Activated CD4-positive, alpha-beta T cell treated with anti-CD3 and anti-CD28 coated beads for 36 hours (primary cell): ENCODE measurements at regions of chrX and their contacts with region 1.

Region 1: GRCh38 chrX:100829730-100830129 is 9.5 kb downstream of the CSTF2 start:
- DNase-seq: peak; percentile 35
- ATAC-seq: peak; percentile 92
- H3K4me3 Mint-ChIP-seq: peak overlapping the region; percentile 59
- H3K27ac Mint-ChIP-seq: peak overlapping the region; percentile 96
- H3K4me1 Mint-ChIP-seq: peaks cover 28% of the 10 kb centered on the region
- H3K27me3 Mint-ChIP-seq: no peaks in the 10 kb centered on the region

Region 2: GRCh38 chrX:100994352-100995281 is 164.9 kb after region 1 on chrX:
- CTCF ChIA-PET with region 1: no interaction called
- POLR2A ChIA-PET with region 1: no interaction called
- intact Hi-C with region 1: loop called in 1 of 2 experiments (anchors 5 kb)
- DNase-seq: peak; percentile 38
- ATAC-seq: peak; percentile 88
- H3K4me3 Mint-ChIP-seq: no peak overlapping the region
- H3K27ac Mint-ChIP-seq: peak overlapping the region; percentile 65
- H3K4me1 Mint-ChIP-seq: peaks cover 22% of the 10 kb centered on the region
- H3K27me3 Mint-ChIP-seq: no peaks in the 10 kb centered on the region

Region 3: GRCh38 chrX:101136235-101136634 is 306.5 kb after region 1 on chrX:
- CTCF ChIA-PET with region 1: no interaction called
- POLR2A ChIA-PET with region 1: interaction called, 12 read pairs
- intact Hi-C with region 1: no loop called
- DNase-seq: no peak
- ATAC-seq: no peak
- H3K4me3 Mint-ChIP-seq: no peak overlapping the region
- H3K27ac Mint-ChIP-seq: no peak overlapping the region
- H3K4me1 Mint-ChIP-seq: no peaks in the 10 kb centered on the region
- H3K27me3 Mint-ChIP-seq: no peaks in the 10 kb centered on the region

Region 4: GRCh38 chrX:101206471-101206870 is 376.7 kb after region 1 on chrX:
- CTCF ChIA-PET with region 1: no interaction called
- POLR2A ChIA-PET with region 1: no interaction called
- intact Hi-C with region 1: loop called in 1 of 2 experiments (anchors 5 kb)
- DNase-seq: peak; percentile 12
- ATAC-seq: peak; percentile 83
- H3K4me3 Mint-ChIP-seq: no peak overlapping the region
- H3K27ac Mint-ChIP-seq: no peak overlapping the region
- H3K4me1 Mint-ChIP-seq: peaks cover 16% of the 10 kb centered on the region
- H3K27me3 Mint-ChIP-seq: no peaks in the 10 kb centered on the region

Region 5: GRCh38 chrX:101348452-101349192 is 518.9 kb after region 1 on chrX and contains the start of gene TIMM8A:
- CTCF ChIA-PET with region 1: no interaction called
- POLR2A ChIA-PET with region 1: no interaction called
- intact Hi-C with region 1: loop called in 1 of 2 experiments (anchors 5 kb)
- DNase-seq: peak; percentile 88
- ATAC-seq: peak; percentile 98
- H3K4me3 Mint-ChIP-seq: peak within 1 kb of the TSS; percentile 85
- H3K27ac Mint-ChIP-seq: peak within 1 kb of the TSS; percentile 93
- H3K4me1 Mint-ChIP-seq: peaks cover 9% of the 10 kb centered on the region
- H3K27me3 Mint-ChIP-seq: no peaks in the 10 kb centered on the region
- total RNA-seq, gene TIMM8A: 12.8 to 23.8 TPM